ENCODE measurements at regions of chr5 and their contacts with region 1.

Region 1: GRCh38 chr5:111641533-111642230 is 115.3 kb downstream of the NREP start:
- DNase-seq: peak; percentile 90
- ATAC-seq: peak; percentile 98
- H3K4me3 ChIP-seq: no peak overlapping the region
- H3K27ac ChIP-seq: no peak overlapping the region
- H3K4me1 ChIP-seq: peaks cover 1% of the 10 kb centered on the region; the same call in 1 of the 2 replicates
- H3K27me3 ChIP-seq: peaks cover 29% of the 10 kb centered on the region
- CTCF ChIP-seq: no peak
- POLR2A ChIP-seq: no peak
- RAD21 ChIP-seq: no peak

Region 2: GRCh38 chr5:111556501-111556900 is 85.2 kb before region 1 on chr5:
- CTCF ChIA-PET with region 1: no interaction called
- POLR2A ChIA-PET with region 1: no interaction called
- dilution Hi-C with region 1: no loop called
- in situ Hi-C with region 1: no loop called
- intact Hi-C with region 1: loop called (anchors 5 kb)
- DNase-seq: no peak
- ATAC-seq: no peak
- H3K4me3 ChIP-seq: no peak overlapping the region
- H3K27ac ChIP-seq: no peak overlapping the region
- H3K4me1 ChIP-seq: no peaks in the 10 kb centered on the region
- H3K27me3 ChIP-seq: no peaks in the 10 kb centered on the region
- CTCF ChIP-seq: no peak
- POLR2A ChIP-seq: no peak
- RAD21 ChIP-seq: no peak